Activated CD4-positive, alpha-beta T cell treated with anti-CD3 and anti-CD28 coated beads for 36 hours (primary cell): ENCODE measurements at regions of chr4 and their contacts with region 1.

Region 1: GRCh38 chr4:20248155-20248558 is 3.5 kb upstream of the SLIT2 start:
- DNase-seq: no peak
- ATAC-seq: no peak
- H3K4me3 Mint-ChIP-seq: no peak overlapping the region
- H3K27ac Mint-ChIP-seq: no peak overlapping the region
- H3K4me1 Mint-ChIP-seq: peaks cover 7% of the 10 kb centered on the region
- H3K27me3 Mint-ChIP-seq: peaks cover 23% of the 10 kb centered on the region

Region 2: GRCh38 chr4:18689308-18690115 is 1558.6 kb before region 1 on chr4:
- CTCF ChIA-PET with region 1: no interaction called
- POLR2A ChIA-PET with region 1: no interaction called
- intact Hi-C with region 1: loop called in 1 of 2 experiments (anchors 5 kb)
- DNase-seq: peak; percentile 61
- ATAC-seq: no peak
- H3K4me3 Mint-ChIP-seq: no peak overlapping the region
- H3K27ac Mint-ChIP-seq: no peak overlapping the region
- H3K4me1 Mint-ChIP-seq: no peaks in the 10 kb centered on the region
- H3K27me3 Mint-ChIP-seq: peaks cover 9% of the 10 kb centered on the region

Region 3: GRCh38 chr4:19224820-19225219 is 1023.3 kb before region 1 on chr4:
- CTCF ChIA-PET with region 1: no interaction called
- POLR2A ChIA-PET with region 1: no interaction called
- intact Hi-C with region 1: loop called in 1 of 2 experiments (anchors 2 kb)
- DNase-seq: no peak
- ATAC-seq: no peak
- H3K4me3 Mint-ChIP-seq: no peak overlapping the region
- H3K27ac Mint-ChIP-seq: no peak overlapping the region
- H3K4me1 Mint-ChIP-seq: no peaks in the 10 kb centered on the region
- H3K27me3 Mint-ChIP-seq: no peaks in the 10 kb centered on the region

Region 4: GRCh38 chr4:19776021-19776459 is 472.1 kb before region 1 on chr4:
- CTCF ChIA-PET with region 1: no interaction called
- POLR2A ChIA-PET with region 1: no interaction called
- intact Hi-C with region 1: no loop called
- DNase-seq: no peak
- ATAC-seq: no peak
- H3K4me3 Mint-ChIP-seq: no peak overlapping the region
- H3K27ac Mint-ChIP-seq: no peak overlapping the region
- H3K4me1 Mint-ChIP-seq: no peaks in the 10 kb centered on the region
- H3K27me3 Mint-ChIP-seq: no peaks in the 10 kb centered on the region

Region 5: DNA sequence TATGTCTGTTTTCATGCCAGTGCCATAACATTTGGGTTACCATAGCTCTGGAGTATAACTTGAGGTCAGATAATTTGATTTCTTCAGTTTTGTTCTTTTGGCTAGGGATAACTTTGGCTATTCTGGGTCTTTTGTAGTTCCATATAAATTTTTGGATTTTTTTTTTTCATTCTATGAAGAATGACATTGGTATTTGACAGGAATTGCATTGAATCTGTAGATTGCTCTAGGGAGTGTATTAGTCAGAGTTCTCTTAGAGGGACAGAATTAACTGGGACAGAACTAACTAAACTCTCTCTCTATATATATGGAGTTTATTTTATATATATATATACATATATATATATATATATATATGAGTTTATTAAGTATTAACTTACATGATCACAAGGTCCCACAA is 28.6 kb before region 1 on chr4:
- CTCF ChIA-PET with region 1: no interaction called
- POLR2A ChIA-PET with region 1: no interaction called
- intact Hi-C with region 1: no loop called
- DNase-seq: no peak
- ATAC-seq: no peak
- H3K4me3 Mint-ChIP-seq: no peak overlapping the region
- H3K27ac Mint-ChIP-seq: no peak overlapping the region
- H3K4me1 Mint-ChIP-seq: no peaks in the 10 kb centered on the region
- H3K27me3 Mint-ChIP-seq: no peaks in the 10 kb centered on the region

Region 6: DNA sequence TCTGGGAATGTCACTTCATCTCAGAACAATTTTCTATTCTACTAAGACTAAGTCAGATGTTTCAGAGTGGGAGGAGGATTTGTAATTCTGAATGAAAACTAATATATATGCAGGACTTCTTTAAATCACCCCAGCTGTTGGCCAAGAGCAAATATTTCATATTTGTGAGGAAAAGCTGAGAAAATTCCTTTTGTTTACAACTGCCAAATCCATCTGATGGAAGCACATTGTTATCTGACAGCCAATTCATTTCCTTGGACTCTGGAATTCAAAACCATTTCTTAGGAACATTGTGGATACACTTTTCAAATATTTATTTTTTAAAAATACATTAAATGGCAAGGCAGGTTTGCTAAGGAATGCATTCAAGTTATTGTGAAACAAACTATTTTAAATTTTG is 11.6 kb after region 1 on chr4:
- CTCF ChIA-PET with region 1: interaction called, 16 read pairs
- POLR2A ChIA-PET with region 1: no interaction called
- intact Hi-C with region 1: no loop called
- DNase-seq: no peak
- ATAC-seq: no peak
- H3K4me3 Mint-ChIP-seq: no peak overlapping the region
- H3K27ac Mint-ChIP-seq: no peak overlapping the region
- H3K4me1 Mint-ChIP-seq: no peaks in the 10 kb centered on the region
- H3K27me3 Mint-ChIP-seq: peaks cover 18% of the 10 kb centered on the region